Activated CD4-positive, alpha-beta T cell treated with anti-CD3 and anti-CD28 coated beads for 36 hours (primary cell): ENCODE measurements at regions of chr1 and their contacts with region 1.

Region 1: DNA sequence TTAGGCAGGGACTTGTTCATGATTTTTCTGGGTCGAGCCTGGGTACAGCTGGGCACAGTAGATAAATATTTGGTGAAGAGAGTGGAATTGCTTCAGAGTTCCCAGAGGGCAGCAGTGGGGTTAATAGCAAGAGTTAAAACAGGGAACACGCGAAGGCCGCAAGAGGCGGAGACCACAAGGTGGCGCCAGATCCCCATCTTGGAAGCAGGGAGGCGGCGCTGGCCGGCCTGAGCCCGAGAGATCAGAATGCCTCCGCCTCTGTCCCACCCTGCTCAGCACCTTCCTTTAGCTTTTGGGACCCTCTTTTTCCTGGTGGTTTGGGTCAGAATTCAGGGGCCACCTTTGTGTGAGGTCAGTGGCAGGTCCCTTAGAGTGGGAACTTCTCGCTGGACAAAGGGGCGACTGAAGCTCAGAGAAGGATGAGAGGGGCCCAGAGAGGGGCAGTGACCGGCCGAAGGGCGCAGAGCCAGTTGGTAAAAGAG is 6.5 kb upstream of the PADI2 start:
- DNase-seq: peak; percentile 91
- ATAC-seq: peak; percentile 93
- H3K4me3 Mint-ChIP-seq: no peak overlapping the region
- H3K27ac Mint-ChIP-seq: no peak overlapping the region
- H3K4me1 Mint-ChIP-seq: no peaks in the 10 kb centered on the region
- H3K27me3 Mint-ChIP-seq: peaks cover 4% of the 10 kb centered on the region

Region 2: GRCh38 chr1:17094664-17095063 is 31.1 kb before region 1 on chr1:
- CTCF ChIA-PET with region 1: no interaction called
- POLR2A ChIA-PET with region 1: no interaction called
- intact Hi-C with region 1: no loop called
- DNase-seq: no peak
- ATAC-seq: no peak
- H3K4me3 Mint-ChIP-seq: no peak overlapping the region
- H3K27ac Mint-ChIP-seq: no peak overlapping the region
- H3K4me1 Mint-ChIP-seq: no peaks in the 10 kb centered on the region
- H3K27me3 Mint-ChIP-seq: peaks cover 6% of the 10 kb centered on the region

Region 3: DNA sequence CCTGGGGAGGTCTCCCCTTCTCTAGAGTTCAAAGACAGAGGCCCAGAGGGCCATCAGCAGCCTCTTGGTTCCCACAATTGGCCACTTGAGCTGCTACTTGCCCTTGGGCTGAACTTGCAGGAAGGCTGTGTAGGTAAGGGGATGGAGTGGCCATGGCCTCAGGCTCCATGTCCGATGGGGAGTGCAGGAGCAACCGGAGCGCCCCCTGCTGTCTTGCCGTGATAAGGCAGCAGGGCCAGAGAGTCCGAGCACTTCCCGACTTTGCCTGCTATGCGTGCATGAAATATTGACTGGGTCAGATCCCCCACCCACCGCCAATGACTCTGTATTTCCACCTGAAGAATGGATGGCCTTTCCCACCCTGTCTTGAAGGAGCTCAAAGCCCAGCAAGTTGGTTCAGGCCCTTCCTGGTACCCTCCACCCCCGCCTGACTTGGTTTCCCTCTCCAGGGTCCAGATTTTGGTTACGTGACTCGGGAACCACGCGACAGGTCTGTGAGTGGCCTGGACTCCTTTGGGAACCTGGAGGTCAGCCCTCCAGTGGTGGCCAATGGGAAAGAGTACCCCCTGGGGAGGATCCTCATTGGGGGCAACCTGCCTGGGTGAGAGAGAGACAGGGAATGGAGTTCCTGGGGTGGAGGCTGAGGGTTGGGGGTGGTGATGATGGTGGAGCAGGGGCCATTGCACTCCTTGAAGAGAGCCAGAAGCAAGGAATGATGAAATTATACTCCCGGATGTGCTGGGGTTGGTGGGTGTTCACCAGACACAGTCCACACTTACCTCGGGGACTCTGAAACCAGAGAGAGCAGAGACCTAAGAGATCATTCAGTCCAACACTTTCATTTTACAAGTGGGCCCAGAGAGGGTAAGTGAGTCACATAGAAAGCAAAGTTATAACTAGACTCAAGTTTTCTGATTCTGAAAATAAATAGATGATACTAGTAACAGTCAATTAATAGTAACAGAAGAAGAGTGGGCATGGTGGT is 148.7 kb after region 1 on chr1:
- CTCF ChIA-PET with region 1: interaction called, 3 read pairs
- POLR2A ChIA-PET with region 1: no interaction called
- intact Hi-C with region 1: loop called in 1 of 2 experiments (anchors 1 kb)
- DNase-seq: peak; percentile 67
- ATAC-seq: peak; percentile 47
- H3K4me3 Mint-ChIP-seq: no peak overlapping the region
- H3K27ac Mint-ChIP-seq: no peak overlapping the region
- H3K4me1 Mint-ChIP-seq: no peaks in the 10 kb centered on the region
- H3K27me3 Mint-ChIP-seq: peaks cover 7% of the 10 kb centered on the region

Region 4: GRCh38 chr1:17335821-17336710 is 210.3 kb after region 1 on chr1:
- CTCF ChIA-PET with region 1: interaction called, 5 read pairs
- POLR2A ChIA-PET with region 1: no interaction called
- intact Hi-C with region 1: loop called (anchors 1 to 5 kb)
- DNase-seq: peak; percentile 86
- ATAC-seq: peak; percentile 55
- H3K4me3 Mint-ChIP-seq: no peak overlapping the region
- H3K27ac Mint-ChIP-seq: no peak overlapping the region
- H3K4me1 Mint-ChIP-seq: peaks cover 1% of the 10 kb centered on the region
- H3K27me3 Mint-ChIP-seq: peaks cover 8% of the 10 kb centered on the region